ENCODE measurements at regions of chr1 and their contacts with region 1.

Region 1: DNA sequence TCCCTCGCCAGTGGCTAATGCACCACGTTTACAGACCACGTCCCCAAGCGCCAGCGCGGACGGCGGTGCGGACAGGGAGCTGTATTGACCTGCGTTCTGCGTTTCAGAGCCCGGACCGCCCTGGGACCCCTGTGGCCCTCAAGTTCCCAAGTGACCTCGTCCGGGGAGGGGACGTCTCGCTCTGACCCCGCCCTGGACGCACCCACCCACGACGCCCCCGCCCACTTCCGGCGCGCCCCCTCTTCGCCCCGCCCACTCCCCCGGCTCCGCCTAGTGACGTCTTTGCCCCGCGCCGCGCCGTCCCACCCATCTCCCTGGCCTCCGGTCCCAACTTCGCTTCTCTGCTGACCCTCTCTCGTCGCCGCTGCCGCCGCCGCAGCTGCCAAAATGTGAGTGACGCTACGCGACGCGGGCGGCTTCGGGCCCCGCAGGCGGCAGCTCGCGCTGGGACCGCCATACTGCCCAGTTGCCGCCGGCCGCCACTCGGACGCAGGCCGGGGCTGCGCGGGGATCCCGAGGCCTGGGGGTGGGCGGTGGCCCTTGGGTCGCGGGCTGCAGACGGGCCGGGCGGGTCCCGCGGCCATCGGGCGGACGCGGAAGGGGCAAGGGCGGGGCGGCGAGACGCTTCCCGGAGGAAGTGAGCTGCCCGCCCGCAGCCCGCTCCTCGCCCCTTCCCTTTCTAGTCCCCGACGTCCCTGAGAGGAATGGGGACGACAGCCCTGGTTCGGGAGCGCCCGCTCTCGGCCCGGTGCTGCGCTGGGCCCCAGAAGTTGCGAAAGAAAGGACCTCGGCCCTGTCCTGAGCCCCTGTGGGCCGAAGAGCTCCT is at the start of gene VAMP3:
- DNase-seq: peak; percentile 88
- H3K4me3 Mint-ChIP-seq: peak within 1 kb of the TSS; percentile 80
- H3K27ac Mint-ChIP-seq: peak within 1 kb of the TSS; percentile 81
- H3K4me1 Mint-ChIP-seq: peaks cover 30% of the 10 kb centered on the region
- H3K27me3 Mint-ChIP-seq: peaks cover 29% of the 10 kb centered on the region
- total RNA-seq, gene VAMP3: 35.0 to 36.5 TPM

Region 2: GRCh38 chr1:7690496-7691182 is 80.6 kb before region 1 on chr1:
- CTCF ChIA-PET with region 1: no interaction called
- POLR2A ChIA-PET with region 1: no interaction called
- DNase-seq: no peak
- H3K4me3 Mint-ChIP-seq: no peak overlapping the region
- H3K27ac Mint-ChIP-seq: no peak overlapping the region
- H3K4me1 Mint-ChIP-seq: no peaks in the 10 kb centered on the region
- H3K27me3 Mint-ChIP-seq: peaks cover 9% of the 10 kb centered on the region

Region 3: GRCh38 chr1:7760245-7760644 is 11.0 kb before region 1 on chr1:
- CTCF ChIA-PET with region 1: no interaction called
- POLR2A ChIA-PET with region 1: interaction called, 10 read pairs
- DNase-seq: no peak
- H3K4me3 Mint-ChIP-seq: no peak overlapping the region
- H3K27ac Mint-ChIP-seq: no peak overlapping the region
- H3K4me1 Mint-ChIP-seq: no peaks in the 10 kb centered on the region
- H3K27me3 Mint-ChIP-seq: peaks cover 11% of the 10 kb centered on the region

Region 4: GRCh38 chr1:7783826-7784491 is 12.7 kb after region 1 on chr1 and contains the start of gene PER3:
- CTCF ChIA-PET with region 1: no interaction called
- POLR2A ChIA-PET with region 1: interaction called, 12 read pairs
- DNase-seq: peak; percentile 88
- H3K4me3 Mint-ChIP-seq: peak within 1 kb of the TSS; percentile 62
- H3K27ac Mint-ChIP-seq: no peak within 1 kb of the TSS
- H3K4me1 Mint-ChIP-seq: peaks cover 28% of the 10 kb centered on the region
- H3K27me3 Mint-ChIP-seq: peaks cover 5% of the 10 kb centered on the region
- total RNA-seq, gene PER3: 2.2 to 2.4 TPM